Tibial artery (tissue), 4 donors: ENCODE measurements at regions of chr11 and their contacts with region 1.

Region 1: GRCh38 chr11:122781378-122782195 is 56.7 kb upstream of the CRTAM start:
- DNase-seq: peak; percentile 91 to 93
- H3K4me3 ChIP-seq: no peak overlapping the region
- H3K27ac ChIP-seq: no peak overlapping the region
- H3K4me1 ChIP-seq: peaks cover 0 to 22% (median 8%) of the 10 kb centered on the region in 4 donors
- H3K27me3 ChIP-seq: no peaks in the 10 kb centered on the region
- CTCF ChIP-seq: peak; percentile 93

Region 2: DNA sequence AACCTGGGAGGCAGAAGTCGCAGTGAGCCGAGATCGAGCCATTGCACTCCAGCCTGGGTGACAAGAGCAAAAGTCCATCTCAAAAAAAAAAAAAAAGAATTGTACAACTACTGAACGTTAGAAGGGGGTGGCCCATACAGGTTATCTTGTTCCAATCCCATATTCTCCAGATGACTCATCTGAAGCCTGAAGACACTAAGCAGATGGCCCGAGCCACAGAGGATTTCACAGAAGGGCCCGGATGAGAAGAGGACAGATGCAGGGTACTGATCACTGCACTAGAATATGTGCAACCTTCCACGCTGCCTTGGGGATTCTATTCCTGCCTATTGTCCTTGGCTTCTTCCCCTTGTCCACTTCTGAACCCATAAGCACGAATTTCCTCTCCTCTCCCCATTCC is 196.9 kb before region 1 on chr11:
- intact Hi-C with region 1: loop called (anchors 5 kb)
- DNase-seq: no peak
- H3K4me3 ChIP-seq: no peak overlapping the region
- H3K27ac ChIP-seq: no peak overlapping the region
- H3K4me1 ChIP-seq: peaks cover 0 to 4% (median 2%) of the 10 kb centered on the region in 4 donors
- H3K27me3 ChIP-seq: no peaks in the 10 kb centered on the region
- CTCF ChIP-seq: no peak

Region 3: DNA sequence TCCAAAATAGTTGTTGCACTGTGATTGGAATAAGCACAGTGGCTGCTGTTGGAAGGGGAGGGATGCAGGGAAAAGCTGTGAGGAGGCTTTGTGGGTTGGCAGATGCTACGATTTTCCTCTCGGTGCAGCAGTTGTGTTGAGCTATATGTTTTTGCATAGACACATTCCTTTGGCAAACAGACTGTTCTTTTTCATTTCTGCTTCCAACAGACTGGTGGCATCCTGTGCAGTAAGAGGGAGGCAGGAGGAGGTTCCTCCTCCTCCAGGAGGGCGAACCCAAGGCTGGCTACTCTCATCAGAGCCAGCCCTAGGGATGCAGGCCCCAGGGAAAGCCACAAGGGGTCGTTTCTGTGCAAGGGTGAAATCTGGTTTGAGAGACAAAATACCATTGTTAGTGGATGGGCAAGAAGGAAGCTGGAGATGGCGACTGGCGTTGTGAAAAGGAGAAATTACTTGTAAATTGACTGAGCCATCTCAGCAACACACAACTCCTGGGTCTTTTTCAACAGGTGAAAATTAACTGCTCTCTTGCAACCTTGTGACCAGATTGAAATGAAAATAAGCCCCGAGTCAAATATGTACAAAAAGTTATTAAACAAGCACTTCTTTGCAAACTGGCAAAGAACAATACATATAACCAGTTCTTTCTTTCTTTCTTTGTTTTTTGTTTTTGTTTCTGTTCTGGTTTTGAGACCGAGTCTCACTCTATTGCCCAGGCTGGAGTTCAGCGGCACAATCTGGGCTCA is 152.6 kb before region 1 on chr11:
- intact Hi-C with region 1: loop called (anchors 2 kb)
- DNase-seq: peak; percentile 77 to 79
- H3K4me3 ChIP-seq: no peak overlapping the region
- H3K27ac ChIP-seq: no peak overlapping the region
- H3K4me1 ChIP-seq: no peaks in the 10 kb centered on the region
- H3K27me3 ChIP-seq: peaks cover 0 to 28% of the 10 kb centered on the region in 2 donors
- CTCF ChIP-seq: peak; percentile 72 to 81